Ovary (tissue), 10 donors: ENCODE measurements at regions of chr17 and their contacts with region 1.

Region 1: GRCh38 chr17:39235555-39236449 is 10.1 kb upstream of the STAC2 start:
- DNase-seq: peak in 1 of 5 donors; percentile 16
- H3K4me3 ChIP-seq: no peak overlapping the region
- H3K27ac ChIP-seq: no peak overlapping the region
- H3K4me1 ChIP-seq: no peaks in the 10 kb centered on the region
- H3K27me3 ChIP-seq: no peaks in the 10 kb centered on the region
- CTCF ChIP-seq: peak in 1 of 3 donors; percentile 14
- EP300 ChIP-seq: no peak
- POLR2A ChIP-seq: no peak

Region 2: DNA sequence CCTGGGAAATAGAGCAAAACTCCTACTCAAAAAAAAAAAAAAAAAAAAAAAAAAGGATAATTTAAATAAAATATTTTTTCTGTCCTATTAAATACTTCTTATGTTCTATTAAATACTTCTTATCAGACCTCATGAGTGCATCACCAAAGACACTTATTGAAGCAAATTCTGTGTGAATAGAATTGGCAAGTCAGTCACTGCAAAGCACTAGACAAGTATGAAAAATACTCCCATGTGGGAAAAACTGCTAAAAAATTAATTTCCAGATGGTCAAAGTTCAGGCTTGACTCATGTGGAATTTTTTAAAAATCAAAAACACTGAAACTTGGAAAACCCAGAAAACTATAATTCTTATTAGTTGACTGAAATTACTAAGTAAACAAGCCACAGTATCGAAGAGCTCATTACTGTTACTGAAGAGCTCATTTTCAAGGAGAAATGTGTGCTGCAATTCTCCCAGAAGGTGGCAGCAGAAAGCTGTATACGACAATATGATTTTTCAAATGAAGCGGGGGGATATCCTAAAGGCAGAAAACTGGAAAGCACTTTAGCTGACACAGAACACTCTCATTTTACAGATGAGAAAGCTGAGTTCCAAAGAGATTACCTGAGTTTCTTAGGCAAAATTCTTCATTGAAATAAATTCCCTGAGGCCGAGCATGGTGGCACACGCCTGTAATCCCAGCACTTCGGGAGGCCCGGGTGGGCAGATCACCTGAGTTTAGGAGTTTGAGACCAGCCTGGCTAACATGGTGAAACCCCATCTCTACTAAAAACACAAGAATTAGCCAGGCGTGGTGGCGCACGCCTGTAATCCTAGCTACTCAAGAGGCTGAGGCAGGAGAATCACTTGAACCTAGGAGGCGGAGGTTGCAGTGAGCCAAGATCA is 252.7 kb before region 1 on chr17:
- intact Hi-C with region 1: loop called in 1 of 4 experiments (anchors 10 kb)
- DNase-seq: peak in 2 of 5 donors; percentile 39 to 68
- H3K4me3 ChIP-seq: no peak overlapping the region
- H3K27ac ChIP-seq: no peak overlapping the region
- H3K4me1 ChIP-seq: peaks cover 4% of the 10 kb centered on the region
- H3K27me3 ChIP-seq: no peaks in the 10 kb centered on the region
- CTCF ChIP-seq: peak; percentile 65 to 91 (median 76)
- EP300 ChIP-seq: no peak
- POLR2A ChIP-seq: no peak

Region 3: GRCh38 chr17:39164675-39165143 is 71.1 kb before region 1 on chr17:
- intact Hi-C with region 1: loop called in 3 of 4 experiments (anchors 5 to 10 kb)
- DNase-seq: peak; percentile 70 to 86 (median 83)
- H3K4me3 ChIP-seq: peak overlapping the region; percentile 43
- H3K27ac ChIP-seq: no peak overlapping the region
- H3K4me1 ChIP-seq: no peaks in the 10 kb centered on the region
- H3K27me3 ChIP-seq: no peaks in the 10 kb centered on the region
- CTCF ChIP-seq: peak; percentile 28 to 55 (median 47)
- EP300 ChIP-seq: no peak
- POLR2A ChIP-seq: no peak